GM12878 (cell line): ENCODE measurements at regions of chr3 and their contacts with region 1.

Region 1: DNA sequence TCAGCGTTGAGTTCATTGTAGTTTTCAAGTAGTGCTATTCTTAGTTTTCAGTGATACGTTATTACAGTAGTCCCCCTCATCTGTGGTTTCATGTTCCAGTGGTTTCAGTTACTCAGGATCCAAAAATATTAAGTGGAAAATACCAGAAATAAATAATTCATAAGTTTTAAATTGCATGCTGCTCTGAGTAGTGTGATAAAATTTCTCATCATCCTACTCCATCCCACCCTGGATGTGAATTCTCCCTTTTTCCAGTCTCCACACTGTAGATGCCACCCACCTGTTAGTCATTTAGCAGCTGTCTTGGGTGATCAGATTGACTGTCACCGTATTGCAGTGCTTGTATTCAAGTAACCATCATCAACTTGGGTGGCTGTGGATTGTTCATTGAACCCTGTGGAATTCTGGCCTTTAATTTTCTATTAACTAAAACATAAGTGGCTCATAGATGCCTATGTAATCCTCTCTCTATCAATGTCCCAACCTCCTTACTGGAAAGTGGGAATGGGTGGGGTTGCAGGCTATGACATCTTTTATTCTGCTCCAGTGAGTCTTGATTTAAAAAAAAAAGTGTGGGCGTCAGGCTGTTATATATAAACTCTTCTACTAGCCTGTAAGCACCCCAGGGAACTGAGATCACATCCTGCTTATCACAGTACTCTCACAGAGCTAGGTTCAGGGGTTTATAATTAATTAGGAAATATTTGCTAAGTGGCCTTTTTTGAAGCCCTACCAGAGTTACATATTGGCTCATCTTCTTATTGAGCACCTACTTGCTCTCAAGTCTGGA is 97.5 kb downstream of the CFAP20DC start:
- DNase-seq: peak; percentile 17
- ATAC-seq: peak; percentile 92
- H3K4me3 ChIP-seq: no peak overlapping the region
- H3K27ac ChIP-seq: no peak overlapping the region
- H3K4me1 ChIP-seq: no peaks in the 10 kb centered on the region
- H3K27me3 ChIP-seq: no peaks in the 10 kb centered on the region
- CTCF ChIP-seq: no peak
- EP300 ChIP-seq: no peak
- POLR2A ChIP-seq: no peak
- RAD21 ChIP-seq: no peak

Region 2: GRCh38 chr3:58965865-58966264 is 13.5 kb after region 1 on chr3:
- CTCF ChIA-PET with region 1: interaction called, 6 read pairs
- POLR2A ChIA-PET with region 1: interaction called, 3 read pairs
- RAD21 ChIA-PET with region 1: interaction called, 5 read pairs
- SMC1A ChIA-PET with region 1: interaction called, 16 read pairs
- in situ Hi-C with region 1: no loop called
- intact Hi-C with region 1: no loop called
- DNase-seq: no peak
- ATAC-seq: no peak
- H3K4me3 ChIP-seq: no peak overlapping the region
- H3K27ac ChIP-seq: no peak overlapping the region
- H3K4me1 ChIP-seq: no peaks in the 10 kb centered on the region
- H3K27me3 ChIP-seq: no peaks in the 10 kb centered on the region
- CTCF ChIP-seq: no peak
- EP300 ChIP-seq: no peak
- POLR2A ChIP-seq: no peak
- RAD21 ChIP-seq: no peak